Activated T-helper 1 cell treated with anti-CD3 and anti-CD28 coated beads, Interleukin-12 subunit alpha, Interleukin-12 subunit beta, Interleukin-2, Interleukin-4 antibody, amounts not matched to agents 30 ng/mL and 10 ng/mL and 1 ng/mL, durations not matched to agents 14 hours and 24 hours and 36 hours (primary cell): ENCODE measurements at regions of chr6 and their contacts with region 1.

Region 1: GRCh38 chr6:90274451-90275030 is 22.1 kb downstream of the BACH2 start:
- DNase-seq: peak; percentile 75
- H3K4me3 Mint-ChIP-seq: peak overlapping the region; percentile 75
- H3K27ac Mint-ChIP-seq: peak overlapping the region; percentile 94
- H3K4me1 Mint-ChIP-seq: peaks cover 86% of the 10 kb centered on the region
- H3K27me3 Mint-ChIP-seq: no peaks in the 10 kb centered on the region

Region 2: GRCh38 chr6:90025523-90026061 is 248.9 kb before region 1 on chr6:
- intact Hi-C with region 1: loop called (anchors 1 kb)
- DNase-seq: no peak
- H3K4me3 Mint-ChIP-seq: peak overlapping the region; percentile 69
- H3K27ac Mint-ChIP-seq: peak overlapping the region; percentile 95
- H3K4me1 Mint-ChIP-seq: peaks cover 77% of the 10 kb centered on the region
- H3K27me3 Mint-ChIP-seq: no peaks in the 10 kb centered on the region

Region 3: GRCh38 chr6:90144396-90144795 is 130.1 kb before region 1 on chr6:
- intact Hi-C with region 1: loop called (anchors 1 kb)
- DNase-seq: no peak
- H3K4me3 Mint-ChIP-seq: peak overlapping the region; percentile 45
- H3K27ac Mint-ChIP-seq: peak overlapping the region; percentile 78
- H3K4me1 Mint-ChIP-seq: peaks cover 66% of the 10 kb centered on the region
- H3K27me3 Mint-ChIP-seq: peaks cover 15% of the 10 kb centered on the region

Region 4: DNA sequence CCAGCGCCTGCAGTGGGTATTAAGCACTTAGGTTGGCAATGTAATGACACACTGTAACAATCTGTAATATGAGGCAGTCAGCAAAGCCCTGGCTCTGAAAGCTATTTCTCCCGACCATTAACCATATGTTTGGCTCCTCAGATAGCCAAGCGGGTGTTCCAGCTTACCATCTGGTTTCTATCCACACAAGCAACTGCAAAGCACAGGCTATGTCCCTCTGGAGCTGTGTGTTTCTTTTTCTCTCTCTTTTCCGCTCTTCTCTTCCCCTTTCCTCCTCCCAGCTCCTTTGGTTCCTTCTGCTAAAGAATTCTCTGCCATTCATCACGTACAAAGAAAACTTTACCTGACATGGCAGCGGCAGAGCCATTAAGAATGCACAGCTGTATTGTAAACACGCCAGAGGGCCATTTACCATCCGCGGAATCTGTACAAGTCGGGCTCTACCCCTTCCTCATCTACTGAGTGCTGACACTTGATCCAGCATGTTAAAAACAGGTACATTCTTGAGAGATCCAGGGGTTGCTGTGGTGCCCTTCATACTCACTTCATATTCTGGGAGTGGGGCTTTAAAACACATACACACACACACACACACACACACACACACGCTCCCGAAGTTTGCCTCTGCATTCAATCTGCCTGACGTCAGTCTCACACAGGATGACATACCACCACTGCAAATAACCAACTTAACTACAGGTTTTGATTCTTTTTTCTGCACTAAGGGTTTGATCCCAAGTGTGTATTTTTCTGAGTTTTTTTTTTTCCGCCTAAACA is 55.1 kb before region 1 on chr6:
- intact Hi-C with region 1: loop called (anchors 1 kb)
- DNase-seq: no peak
- H3K4me3 Mint-ChIP-seq: no peak overlapping the region
- H3K27ac Mint-ChIP-seq: no peak overlapping the region
- H3K4me1 Mint-ChIP-seq: no peaks in the 10 kb centered on the region
- H3K27me3 Mint-ChIP-seq: no peaks in the 10 kb centered on the region

Region 5: GRCh38 chr6:90256698-90257485 is 17.6 kb before region 1 on chr6:
- intact Hi-C with region 1: loop called (anchors 1 kb)
- DNase-seq: peak; percentile 27
- H3K4me3 Mint-ChIP-seq: peak overlapping the region; percentile 0
- H3K27ac Mint-ChIP-seq: peak overlapping the region; percentile 87
- H3K4me1 Mint-ChIP-seq: peaks cover 78% of the 10 kb centered on the region
- H3K27me3 Mint-ChIP-seq: no peaks in the 10 kb centered on the region

Region 6: DNA sequence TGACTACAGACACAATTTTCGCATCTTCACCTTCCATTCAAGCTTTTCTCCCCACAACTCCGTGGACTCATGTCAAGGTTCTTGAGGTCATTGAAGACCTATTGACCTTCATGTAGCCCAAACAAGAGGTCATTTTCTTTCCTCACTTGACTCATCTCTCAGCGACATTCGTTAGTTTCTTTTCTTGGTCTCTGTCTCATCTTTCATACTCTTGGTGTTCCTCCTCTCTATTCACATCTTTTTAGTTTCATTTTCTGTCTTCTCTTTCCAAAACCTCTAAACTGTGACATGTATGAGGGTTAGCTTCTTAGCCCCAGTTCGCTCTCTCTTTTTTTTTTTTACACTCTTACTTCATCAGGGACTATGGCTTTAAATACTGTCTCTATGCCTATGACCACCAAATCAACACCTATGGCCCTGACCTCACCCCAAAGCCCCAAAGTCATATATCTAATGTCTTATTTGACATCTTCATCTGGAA is 150.7 kb after region 1 on chr6:
- intact Hi-C with region 1: loop called (anchors 1 kb)
- DNase-seq: no peak
- H3K4me3 Mint-ChIP-seq: peak overlapping the region; percentile 68
- H3K27ac Mint-ChIP-seq: peak overlapping the region; percentile 87
- H3K4me1 Mint-ChIP-seq: peaks cover 26% of the 10 kb centered on the region
- H3K27me3 Mint-ChIP-seq: no peaks in the 10 kb centered on the region

Region 7: DNA sequence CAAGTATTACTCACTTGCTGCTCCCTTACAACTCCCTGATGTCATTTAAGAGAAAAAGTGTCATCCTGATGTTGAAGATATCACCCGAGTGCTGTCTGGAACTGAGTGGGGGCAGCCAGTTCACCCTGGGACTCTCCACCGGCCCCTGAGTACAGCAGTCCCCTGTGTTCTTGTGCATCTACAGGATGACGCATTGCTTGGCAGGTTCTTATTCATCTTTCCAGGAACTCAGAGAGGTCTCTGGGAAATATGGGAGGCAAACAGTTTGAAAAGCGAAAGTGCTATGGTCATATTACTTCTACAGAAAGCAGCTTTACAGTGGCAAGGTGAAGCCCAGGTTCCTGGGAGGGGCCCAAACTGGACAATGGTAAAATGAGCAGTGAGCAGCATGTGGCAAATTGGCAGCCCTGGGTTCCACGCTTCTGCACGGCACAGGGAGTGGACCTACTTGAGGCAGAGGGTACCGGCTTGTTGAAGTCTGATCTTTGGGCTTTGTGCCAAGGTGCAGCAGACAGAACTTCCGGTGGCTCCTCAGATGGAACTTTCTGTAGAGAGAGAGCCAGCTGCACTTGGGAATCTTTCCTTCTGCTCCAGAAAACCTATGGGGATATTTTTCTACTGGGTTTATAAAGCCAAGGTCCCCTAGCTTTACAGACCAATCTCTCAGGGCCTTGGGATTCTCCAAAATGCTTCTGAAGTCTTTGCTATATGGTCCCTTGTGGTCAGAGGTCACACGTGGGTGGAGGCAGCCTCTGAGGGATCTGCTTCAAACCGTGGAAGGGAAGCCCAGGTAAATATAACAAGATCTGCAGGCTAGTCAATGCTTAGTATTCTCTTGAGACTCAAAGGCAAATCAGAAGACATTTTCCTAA is 184.0 kb after region 1 on chr6:
- intact Hi-C with region 1: loop called (anchors 1 kb)
- DNase-seq: peak; percentile 66
- H3K4me3 Mint-ChIP-seq: peak overlapping the region; percentile 47
- H3K27ac Mint-ChIP-seq: peak overlapping the region; percentile 93
- H3K4me1 Mint-ChIP-seq: peaks cover 65% of the 10 kb centered on the region
- H3K27me3 Mint-ChIP-seq: no peaks in the 10 kb centered on the region